Heart left ventricle (tissue), 16 donors: ENCODE measurements at regions of chr6 and their contacts with region 1.

Region 1: DNA sequence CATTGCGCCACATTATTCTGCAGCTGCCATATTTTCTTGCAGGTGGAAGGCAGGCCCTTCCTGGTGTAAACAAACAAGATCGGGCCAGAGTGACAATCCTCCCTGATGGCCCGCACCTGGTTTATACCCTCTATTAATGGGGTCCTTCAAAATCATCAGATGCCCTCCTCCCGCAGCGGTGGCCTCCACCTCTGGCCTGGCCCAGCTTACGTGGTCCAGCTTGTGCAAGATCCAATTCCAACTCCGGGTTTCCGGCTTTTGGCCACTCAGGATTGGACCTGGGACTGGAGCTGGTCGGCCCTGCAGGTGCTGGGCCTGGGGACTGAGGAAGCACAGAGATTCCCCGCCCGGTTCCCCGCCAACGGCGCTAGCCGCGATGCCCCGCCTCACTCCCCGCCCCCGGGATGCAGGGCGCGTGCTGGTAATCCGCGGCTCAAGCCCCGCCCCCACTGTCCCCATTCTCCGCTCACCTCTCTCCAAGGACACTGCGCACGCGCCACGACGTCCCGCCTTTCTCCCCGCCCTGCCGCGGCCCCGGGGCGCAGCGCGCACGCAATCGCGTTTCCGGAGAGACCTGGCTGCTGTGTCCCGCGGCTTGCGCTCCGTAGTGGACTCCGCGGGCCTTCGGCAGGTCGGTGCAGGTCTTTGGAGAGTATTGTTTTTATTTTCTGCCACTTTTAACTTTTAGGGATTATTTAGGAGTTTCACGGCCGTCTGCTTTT is at the start of gene TMEM14B:
- DNase-seq: peak; percentile 100
- ATAC-seq: peak; percentile 99 to 100 (median 100)
- H3K4me3 ChIP-seq: peak within 1 kb of the TSS; percentile 57 to 89 (median 79)
- H3K27ac ChIP-seq: peak within 1 kb of the TSS; percentile 29 to 88 (median 83)
- H3K4me1 ChIP-seq: peaks cover 0 to 40% (median 27%) of the 10 kb centered on the region in 12 donors
- H3K27me3 ChIP-seq: no peaks in the 10 kb centered on the region
- CTCF ChIP-seq: peak in 1 of 12 donors; percentile 6
- POLR2A ChIP-seq: no peak
- total RNA-seq, gene TMEM14B: 77.9 to 119 (median 102) TPM

Region 2: DNA sequence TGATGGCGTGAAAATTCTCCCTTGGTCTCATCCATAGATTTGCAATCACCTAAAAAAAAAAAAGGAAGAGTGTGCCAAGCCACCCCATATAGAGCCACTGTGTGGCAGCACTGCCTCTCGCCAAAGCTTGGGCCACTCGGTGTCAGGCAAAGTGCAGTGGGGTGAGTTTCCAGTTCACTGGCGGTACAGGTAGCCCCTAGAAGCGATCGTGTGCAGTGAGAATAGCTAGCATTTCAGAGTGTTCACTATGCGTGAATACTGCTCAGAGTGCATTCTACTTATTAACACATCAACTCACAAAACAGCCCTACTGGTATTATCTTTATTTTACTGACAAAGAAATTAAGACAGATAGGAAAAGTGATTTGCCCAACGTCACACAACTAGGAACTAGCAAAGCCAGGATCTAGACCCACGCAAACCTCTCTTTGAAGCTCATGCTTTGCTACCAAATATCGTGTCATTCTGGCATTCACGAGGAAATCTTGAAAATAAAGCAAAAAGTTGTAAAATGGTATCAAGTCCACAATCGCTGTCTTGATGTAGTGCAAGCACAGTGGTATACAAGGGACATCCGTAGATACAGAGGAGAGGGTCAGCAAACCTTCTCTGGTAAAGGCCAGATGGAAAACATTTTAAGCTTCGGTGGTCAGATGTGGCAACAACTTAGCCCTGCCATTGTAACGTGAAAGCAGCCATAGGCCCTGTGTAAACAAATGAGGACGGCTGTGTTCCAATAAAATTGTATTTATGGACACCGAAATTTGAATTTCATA is 236.6 kb before region 1 on chr6:
- intact Hi-C with region 1: loop called in 1 of 10 experiments (anchors 5 kb)
- DNase-seq: peak; percentile 64 to 81 (median 75)
- ATAC-seq: peak; percentile 91 to 96 (median 92)
- H3K4me3 ChIP-seq: peak overlapping the region in 6 of 12 donors; percentile 7 to 29 (median 14)
- H3K27ac ChIP-seq: peak overlapping the region; percentile 64 to 95 (median 81)
- H3K4me1 ChIP-seq: peaks cover 0 to 16% (median 0%) of the 10 kb centered on the region in 12 donors
- H3K27me3 ChIP-seq: no peaks in the 10 kb centered on the region
- CTCF ChIP-seq: peak; percentile 49 to 75 (median 58)
- POLR2A ChIP-seq: peak in 1 of 2 donors; percentile 6

Region 3: DNA sequence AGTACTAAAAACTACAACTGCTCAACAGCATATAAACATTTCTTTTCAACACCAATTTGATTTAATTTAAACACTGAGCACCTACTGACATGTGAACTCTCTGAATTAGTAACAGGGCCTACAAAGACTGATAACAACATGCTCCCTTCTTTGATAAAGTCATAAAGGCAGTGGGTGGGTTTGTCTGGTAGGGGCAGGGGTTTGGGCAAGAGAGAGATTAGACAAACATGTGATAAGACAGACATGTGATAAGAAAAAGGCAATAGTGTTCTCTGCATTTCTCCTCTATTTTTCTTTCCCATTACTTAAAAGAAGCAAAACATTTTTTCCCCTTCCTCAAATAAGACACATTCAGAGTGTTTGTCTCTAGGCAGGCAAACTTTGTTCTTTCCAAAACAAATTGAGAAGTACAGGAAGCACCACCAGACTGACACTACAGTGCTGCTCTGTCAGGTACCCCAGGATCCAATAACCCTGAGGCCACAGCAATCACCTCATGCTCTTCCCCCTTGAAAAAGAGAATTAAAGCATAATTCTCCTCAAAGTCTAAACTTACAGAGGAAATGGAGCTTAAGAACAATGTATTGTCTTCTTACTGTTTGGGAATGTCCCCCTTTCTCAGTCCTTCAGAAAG is 64.9 kb before region 1 on chr6:
- intact Hi-C with region 1: no loop called
- DNase-seq: no peak
- ATAC-seq: no peak
- H3K4me3 ChIP-seq: no peak overlapping the region
- H3K27ac ChIP-seq: no peak overlapping the region
- H3K4me1 ChIP-seq: no peaks in the 10 kb centered on the region
- H3K27me3 ChIP-seq: no peaks in the 10 kb centered on the region
- CTCF ChIP-seq: no peak
- POLR2A ChIP-seq: no peak

Region 4: DNA sequence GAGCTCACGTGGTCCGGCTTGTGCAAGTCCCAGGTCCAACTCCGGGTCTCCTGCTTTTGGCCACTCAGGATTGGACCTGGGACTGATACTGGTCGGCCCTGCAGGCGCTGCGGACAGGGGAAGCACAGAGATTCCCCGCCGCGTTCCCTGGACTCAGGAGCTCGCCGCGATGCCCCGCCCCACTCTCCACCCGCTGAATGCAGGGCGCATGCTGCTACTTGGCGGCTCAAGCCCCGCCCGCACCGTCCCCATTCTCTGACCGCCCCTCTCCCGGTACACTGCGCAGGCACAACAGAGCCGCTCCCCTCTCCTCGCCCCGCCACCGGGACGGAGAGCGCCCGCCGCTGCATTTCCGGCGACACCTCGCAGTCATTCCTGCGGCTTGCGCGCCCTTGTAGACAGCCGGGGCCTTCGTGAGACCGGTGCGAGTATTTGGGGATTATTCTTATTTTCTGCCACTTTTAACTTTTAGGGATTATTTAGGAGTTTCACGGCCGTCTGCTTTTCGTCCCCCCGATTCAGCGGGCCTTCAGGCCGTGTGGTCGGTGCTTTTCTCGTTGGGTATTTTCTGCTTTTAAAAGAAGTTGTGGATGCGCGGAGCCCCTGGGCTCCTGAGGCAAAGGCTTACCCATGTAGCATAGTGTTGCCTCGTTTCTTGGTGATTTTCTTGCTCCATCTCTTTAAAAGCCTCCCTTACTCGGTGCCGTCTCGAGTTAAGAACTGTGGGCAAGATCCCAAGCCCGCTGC is 24.4 kb before region 1 on chr6 and contains the start of gene TMEM14C:
- intact Hi-C with region 1: loop called in 7 of 10 experiments (anchors 1 to 2 kb)
- DNase-seq: peak; percentile 99 to 100 (median 99)
- ATAC-seq: peak; percentile 99 to 100 (median 99)
- H3K4me3 ChIP-seq: peak within 1 kb of the TSS; percentile 35 to 88 (median 72)
- H3K27ac ChIP-seq: peak within 1 kb of the TSS; percentile 19 to 94 (median 89)
- H3K4me1 ChIP-seq: peaks cover 0 to 48% (median 31%) of the 10 kb centered on the region in 12 donors
- H3K27me3 ChIP-seq: no peaks in the 10 kb centered on the region
- CTCF ChIP-seq: no peak
- POLR2A ChIP-seq: peak in 1 of 2 donors; percentile 80
- total RNA-seq, gene TMEM14C: 94.5 to 142 (median 115) TPM